Naive thymus-derived CD4-positive, alpha-beta T cell (primary cell): ENCODE measurements at regions of chr14 and their contacts with region 1.

Region 1: GRCh38 chr14:101823511-101824120 is 62.1 kb downstream of the PPP2R5C start:
- DNase-seq: peak in 8 of 9 donors; percentile 71 to 87 (median 82)
- ATAC-seq: peak; percentile 72
- H3K4me3 ChIP-seq: peak overlapping the region; percentile 67
- H3K4me3 Mint-ChIP-seq: peak overlapping the region; percentile 85 to 96 (median 90)
- H3K27ac ChIP-seq: peak overlapping the region; percentile 97
- H3K27ac Mint-ChIP-seq: peak overlapping the region; percentile 90 to 100 (median 99)
- H3K4me1 ChIP-seq: peaks cover 64 to 68% of the 10 kb centered on the region in 2 donors
- H3K4me1 Mint-ChIP-seq: peaks cover 65 to 91% (median 86%) of the 10 kb centered on the region in 7 donors
- H3K27me3 ChIP-seq: no peaks in the 10 kb centered on the region
- H3K27me3 Mint-ChIP-seq: peaks cover 0 to 2% (median 0%) of the 10 kb centered on the region in 5 donors

Region 2: GRCh38 chr14:101767618-101768362 is 55.8 kb before region 1 on chr14:
- CTCF ChIA-PET with region 1: interaction called, 25 read pairs
- POLR2A ChIA-PET with region 1: interaction called, 33 read pairs
- intact Hi-C with region 1: loop called (anchors 1 to 2 kb)
- DNase-seq: no peak
- ATAC-seq: no peak
- H3K4me3 ChIP-seq: no peak overlapping the region
- H3K4me3 Mint-ChIP-seq: no peak overlapping the region
- H3K27ac ChIP-seq: no peak overlapping the region
- H3K27ac Mint-ChIP-seq: peak overlapping the region in 3 of 9 donors; percentile 2 to 43 (median 6)
- H3K4me1 ChIP-seq: peaks cover 9 to 11% of the 10 kb centered on the region in 2 donors
- H3K4me1 Mint-ChIP-seq: peaks cover 28 to 52% (median 38%) of the 10 kb centered on the region in 7 donors
- H3K27me3 ChIP-seq: no peaks in the 10 kb centered on the region
- H3K27me3 Mint-ChIP-seq: no peaks in the 10 kb centered on the region

Region 3: DNA sequence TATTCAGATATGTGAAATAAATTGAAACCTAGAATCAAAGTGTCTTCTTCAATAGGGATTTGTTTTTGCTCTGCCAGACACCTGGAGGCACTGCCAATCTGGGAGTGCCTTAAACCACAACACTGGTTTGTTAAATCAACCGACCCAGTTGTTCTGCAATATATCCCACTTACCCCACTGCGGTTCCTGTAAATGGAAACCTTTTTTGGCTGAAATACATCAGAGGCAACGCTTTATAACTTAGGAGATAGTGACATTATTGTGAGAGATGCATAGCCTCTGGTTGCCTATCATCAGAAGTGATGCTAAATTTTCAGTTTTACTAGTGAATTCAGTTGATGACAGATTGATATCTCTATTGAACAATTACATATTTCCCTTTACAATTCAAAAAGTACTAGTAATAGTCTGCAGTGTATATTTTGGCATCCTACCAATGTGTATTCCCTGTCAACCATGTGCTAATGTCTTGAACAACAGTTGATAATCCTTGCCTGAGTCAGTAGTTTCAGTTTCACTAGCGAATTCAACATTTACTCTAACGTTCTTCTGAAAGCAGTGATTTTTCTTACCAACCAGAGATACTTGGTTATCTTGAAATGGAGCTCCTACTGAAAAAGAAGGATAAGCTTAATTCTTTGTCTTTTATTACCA is 31.6 kb before region 1 on chr14:
- CTCF ChIA-PET with region 1: interaction called, 4 read pairs
- POLR2A ChIA-PET with region 1: interaction called, 22 read pairs
- intact Hi-C with region 1: loop called (anchors 1 kb)
- DNase-seq: peak in 4 of 9 donors; percentile 38 to 54 (median 50)
- ATAC-seq: peak; percentile 67
- H3K4me3 ChIP-seq: peak overlapping the region; percentile 36
- H3K4me3 Mint-ChIP-seq: peak overlapping the region; percentile 39 to 85 (median 77)
- H3K27ac ChIP-seq: peak overlapping the region; percentile 70
- H3K27ac Mint-ChIP-seq: peak overlapping the region; percentile 76 to 93 (median 86)
- H3K4me1 ChIP-seq: peaks cover 3 to 9% of the 10 kb centered on the region in 2 donors
- H3K4me1 Mint-ChIP-seq: peaks cover 12 to 42% (median 27%) of the 10 kb centered on the region in 7 donors
- H3K27me3 ChIP-seq: no peaks in the 10 kb centered on the region
- H3K27me3 Mint-ChIP-seq: no peaks in the 10 kb centered on the region

Region 4: GRCh38 chr14:101843665-101844064 is 20.0 kb after region 1 on chr14:
- CTCF ChIA-PET with region 1: interaction called, 6 read pairs
- POLR2A ChIA-PET with region 1: interaction called, 52 read pairs
- intact Hi-C with region 1: loop called (anchors 1 to 2 kb)
- DNase-seq: peak in 7 of 9 donors; percentile 54 to 70 (median 59)
- ATAC-seq: peak; percentile 88
- H3K4me3 ChIP-seq: no peak overlapping the region
- H3K4me3 Mint-ChIP-seq: peak overlapping the region in 9 of 10 donors; percentile 5 to 66 (median 56)
- H3K27ac ChIP-seq: peak overlapping the region; percentile 30
- H3K27ac Mint-ChIP-seq: peak overlapping the region; percentile 70 to 90 (median 84)
- H3K4me1 ChIP-seq: peaks cover 56 to 57% of the 10 kb centered on the region in 2 donors
- H3K4me1 Mint-ChIP-seq: peaks cover 67 to 99% (median 90%) of the 10 kb centered on the region in 7 donors
- H3K27me3 ChIP-seq: no peaks in the 10 kb centered on the region
- H3K27me3 Mint-ChIP-seq: no peaks in the 10 kb centered on the region

Region 5: DNA sequence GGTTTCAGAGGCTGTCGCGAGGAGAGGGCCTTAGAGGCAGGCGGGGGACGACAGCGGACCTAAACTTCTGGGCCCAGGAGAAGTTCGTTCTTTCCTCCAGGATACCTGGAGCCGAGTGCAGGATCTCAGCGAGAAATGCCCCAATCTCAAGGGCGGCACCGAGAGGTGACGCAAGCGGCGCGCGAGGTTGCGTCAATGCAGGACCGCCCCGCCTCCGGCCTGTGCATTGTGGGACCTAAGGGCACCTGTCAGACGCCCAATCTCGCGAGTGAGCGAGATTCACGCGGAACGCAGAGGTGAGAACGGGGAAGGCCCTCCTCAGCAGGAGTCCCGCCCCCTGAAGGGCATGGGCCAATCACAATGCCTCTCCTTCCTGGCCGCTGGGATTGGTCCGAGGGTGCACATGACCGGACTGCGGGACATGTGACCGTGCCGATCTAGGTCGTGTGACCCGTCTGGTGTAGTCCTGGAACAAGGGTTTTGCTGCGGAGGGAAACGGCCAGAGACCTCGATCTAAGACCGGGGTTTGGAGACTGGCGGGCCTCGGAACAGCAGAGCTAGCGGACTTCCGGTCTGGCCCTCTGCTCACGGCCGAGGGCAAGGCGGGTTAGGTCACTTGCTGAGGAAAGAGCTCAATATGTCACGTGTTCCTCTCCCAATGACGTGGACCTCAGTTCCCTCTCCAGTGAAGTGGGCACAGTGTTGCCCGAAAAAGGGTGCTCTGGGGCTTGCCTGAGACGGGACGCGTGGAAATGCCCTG is 124.5 kb after region 1 on chr14:
- CTCF ChIA-PET with region 1: no interaction called
- POLR2A ChIA-PET with region 1: interaction called, 4 read pairs
- intact Hi-C with region 1: loop called in 1 of 2 experiments (anchors 1 kb)
- DNase-seq: peak; percentile 95 to 100 (median 99)
- ATAC-seq: peak; percentile 97
- H3K4me3 ChIP-seq: peak overlapping the region; percentile 96
- H3K4me3 Mint-ChIP-seq: peak overlapping the region; percentile 86 to 99 (median 98)
- H3K27ac ChIP-seq: peak overlapping the region; percentile 99
- H3K27ac Mint-ChIP-seq: peak overlapping the region; percentile 97 to 100 (median 99)
- H3K4me1 ChIP-seq: peaks cover 9 to 10% of the 10 kb centered on the region in 2 donors
- H3K4me1 Mint-ChIP-seq: peaks cover 17 to 34% (median 25%) of the 10 kb centered on the region in 7 donors
- H3K27me3 ChIP-seq: no peaks in the 10 kb centered on the region
- H3K27me3 Mint-ChIP-seq: peaks cover 15 to 37% (median 30%) of the 10 kb centered on the region in 5 donors